AG04450 (cell line): ENCODE measurements at regions of chr1 and their contacts with region 1.

Region 1: GRCh38 chr1:165914136-165914798 is 86.9 kb downstream of the UCK2 start:
- DNase-seq: peak; percentile 67
- H3K4me3 ChIP-seq: no peak overlapping the region
- H3K27ac ChIP-seq: no peak overlapping the region
- H3K27me3 ChIP-seq: no peaks in the 10 kb centered on the region
- CTCF ChIP-seq: peak; percentile 93

Region 2: DNA sequence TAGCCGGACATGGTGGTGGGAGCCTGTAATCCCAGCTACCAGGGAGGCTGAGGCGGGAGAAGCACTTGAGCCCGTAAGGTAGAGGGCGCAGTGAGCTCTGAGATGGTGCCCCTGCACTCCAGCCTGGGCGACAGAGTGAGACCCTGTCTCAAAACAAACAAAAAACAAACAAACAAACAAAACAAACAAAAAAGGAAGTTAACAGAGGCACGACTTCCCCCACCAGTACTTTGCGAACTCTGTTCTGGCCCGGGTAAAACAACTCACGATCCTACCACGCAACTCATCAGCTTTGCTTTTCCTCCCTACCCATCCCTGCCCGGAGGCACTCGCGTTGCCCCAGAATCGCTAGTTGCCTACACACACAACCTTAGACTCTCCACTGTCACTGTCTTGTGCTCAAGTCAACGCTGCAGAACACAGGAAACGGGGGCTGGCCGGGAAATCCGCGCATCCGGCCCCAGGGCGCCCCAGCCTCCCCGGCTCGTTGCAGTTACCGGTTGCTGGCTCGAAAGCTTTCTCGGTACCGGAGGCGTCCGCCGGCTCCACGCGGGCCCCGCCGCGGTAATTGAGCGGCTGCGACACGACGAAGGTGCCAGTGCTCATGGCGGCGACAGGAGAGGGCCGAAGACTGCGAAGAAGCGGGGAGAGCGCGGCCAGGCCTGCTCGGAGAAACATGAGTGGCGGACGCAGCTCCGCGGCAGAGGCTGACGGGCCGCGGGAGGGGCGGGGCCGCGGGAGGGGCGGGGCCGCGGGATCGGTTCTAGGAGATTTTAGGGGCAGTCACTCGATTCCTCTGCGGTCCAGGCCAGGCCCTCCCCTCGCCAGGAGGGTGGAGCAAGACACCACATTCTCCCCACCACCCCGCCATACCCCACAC is 216.1 kb before region 1 on chr1 and contains the start of gene ALDH9A1:
- CTCF ChIA-PET with region 1: interaction called, 10 read pairs
- POLR2A ChIA-PET with region 1: no interaction called
- DNase-seq: peak; percentile 55
- H3K4me3 ChIP-seq: peak within 1 kb of the TSS; percentile 93
- H3K27ac ChIP-seq: peak within 1 kb of the TSS; percentile 92
- H3K27me3 ChIP-seq: no peaks in the 10 kb centered on the region
- CTCF ChIP-seq: peak; percentile 42
- polyA plus RNA-seq, gene ALDH9A1: 94.3 and 149 TPM in 2 replicates

Region 3: DNA sequence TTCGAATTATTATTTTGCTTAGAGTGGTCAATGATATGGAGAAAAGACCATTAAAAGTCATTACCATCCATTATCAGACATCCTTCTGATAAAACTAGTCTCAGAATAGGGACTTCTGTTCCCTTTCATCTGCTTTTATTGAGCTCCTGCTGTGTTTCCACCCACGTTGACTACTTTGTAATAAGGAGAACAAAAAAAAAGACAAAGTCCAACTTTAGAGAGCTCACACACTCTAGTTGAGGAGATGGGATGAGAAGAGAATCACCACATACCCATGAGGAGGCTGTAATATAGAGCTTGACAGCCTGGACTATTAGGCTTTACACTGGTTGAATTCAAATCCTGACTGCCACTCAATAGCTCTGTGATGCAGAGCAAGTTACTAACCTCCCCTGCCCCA is 188.1 kb before region 1 on chr1:
- CTCF ChIA-PET with region 1: interaction called, 25 read pairs
- POLR2A ChIA-PET with region 1: no interaction called
- DNase-seq: no peak
- H3K4me3 ChIP-seq: no peak overlapping the region
- H3K27ac ChIP-seq: no peak overlapping the region
- H3K27me3 ChIP-seq: no peaks in the 10 kb centered on the region
- CTCF ChIP-seq: no peak

Region 4: GRCh38 chr1:165759095-165759494 is 155.2 kb before region 1 on chr1:
- CTCF ChIA-PET with region 1: interaction called, 13 read pairs
- POLR2A ChIA-PET with region 1: no interaction called
- DNase-seq: no peak
- H3K4me3 ChIP-seq: no peak overlapping the region
- H3K27ac ChIP-seq: no peak overlapping the region
- H3K27me3 ChIP-seq: no peaks in the 10 kb centered on the region
- CTCF ChIP-seq: no peak

Region 5: DNA sequence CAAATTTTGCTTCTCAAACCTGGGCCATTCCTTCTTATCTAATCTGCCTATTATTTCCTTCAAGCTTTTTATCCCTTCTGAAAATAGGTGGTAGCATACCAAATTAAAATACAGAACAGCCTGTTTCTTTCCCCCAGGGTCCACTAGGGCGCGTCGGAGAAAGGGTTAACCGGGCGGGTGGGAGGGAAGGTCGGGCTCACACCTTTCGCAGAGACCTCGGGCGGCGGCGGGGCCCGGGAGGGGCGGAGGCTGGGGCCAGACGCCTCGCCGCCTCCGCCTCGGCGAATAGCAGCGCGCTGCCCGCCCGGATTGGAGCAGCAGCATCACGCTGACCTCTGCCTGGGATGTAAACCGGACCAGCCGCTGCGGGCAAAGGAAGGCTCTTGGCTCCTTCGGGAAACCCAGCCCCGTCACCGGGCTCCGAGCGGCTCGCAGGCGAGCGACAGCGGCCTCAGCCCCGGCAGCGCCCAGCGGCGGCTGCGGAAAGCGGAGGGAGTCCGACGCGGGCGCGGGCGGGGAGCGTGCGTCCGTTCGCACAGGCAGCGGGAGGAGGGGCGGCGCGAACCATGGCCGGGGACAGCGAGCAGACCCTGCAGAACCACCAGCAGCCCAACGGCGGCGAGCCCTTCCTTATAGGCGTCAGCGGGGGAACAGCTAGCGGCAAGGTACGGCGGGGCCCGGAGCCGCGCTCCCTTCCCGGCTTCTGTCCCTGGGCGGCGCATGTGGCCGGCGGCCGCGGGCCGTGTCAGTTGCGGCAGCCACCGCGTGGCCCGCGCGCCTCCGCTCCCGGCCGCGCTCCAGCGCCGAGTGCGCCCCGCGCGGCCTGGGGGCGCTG is 86.8 kb before region 1 on chr1 and contains the start of gene UCK2:
- CTCF ChIA-PET with region 1: interaction called, 27 read pairs
- POLR2A ChIA-PET with region 1: no interaction called
- DNase-seq: peak; percentile 43
- H3K4me3 ChIP-seq: peak within 1 kb of the TSS; percentile 88
- H3K27ac ChIP-seq: peak within 1 kb of the TSS; percentile 86
- H3K27me3 ChIP-seq: no peaks in the 10 kb centered on the region
- CTCF ChIP-seq: no peak
- polyA plus RNA-seq, gene UCK2: 52.7 and 59.1 TPM in 2 replicates

Region 6: DNA sequence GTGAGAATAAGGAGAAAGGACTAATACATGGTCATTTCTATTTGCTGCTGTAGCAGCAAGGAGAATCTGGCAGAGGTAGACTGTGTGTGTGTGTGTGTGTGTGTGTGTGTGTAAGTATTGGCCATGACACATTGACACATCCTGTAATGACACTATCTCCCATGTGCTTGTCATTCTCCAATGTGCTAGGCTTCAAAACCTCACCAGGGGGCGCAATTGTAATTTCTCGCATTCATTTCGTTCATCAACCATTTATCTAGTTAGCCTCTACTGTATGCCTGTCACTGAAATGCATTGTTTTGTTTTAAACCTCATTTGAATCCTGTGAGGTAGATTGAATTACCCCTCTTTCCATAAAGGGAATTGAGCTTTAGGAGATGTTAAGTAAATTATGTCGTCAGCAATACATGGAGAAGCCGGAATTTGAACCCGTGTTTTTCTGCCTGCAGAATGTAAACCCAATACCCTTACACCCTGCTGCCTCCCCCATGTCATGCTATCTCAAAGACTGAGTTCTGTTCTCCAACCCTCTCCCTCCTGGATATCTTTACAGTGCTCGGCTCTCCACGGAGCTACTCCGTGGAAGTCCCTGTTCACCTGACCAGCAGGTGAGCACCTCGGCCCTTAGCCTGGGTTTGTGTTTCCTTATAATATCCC is 13.9 kb after region 1 on chr1:
- CTCF ChIA-PET with region 1: interaction called, 53 read pairs
- POLR2A ChIA-PET with region 1: no interaction called
- DNase-seq: peak; percentile 10
- H3K4me3 ChIP-seq: no peak overlapping the region
- H3K27ac ChIP-seq: no peak overlapping the region
- H3K27me3 ChIP-seq: no peaks in the 10 kb centered on the region
- CTCF ChIP-seq: peak; percentile 73

Region 7: GRCh38 chr1:165942927-165943597 is 28.8 kb after region 1 on chr1:
- CTCF ChIA-PET with region 1: no interaction called
- POLR2A ChIA-PET with region 1: no interaction called
- DNase-seq: no peak
- H3K4me3 ChIP-seq: no peak overlapping the region
- H3K27ac ChIP-seq: no peak overlapping the region
- H3K27me3 ChIP-seq: no peaks in the 10 kb centered on the region
- CTCF ChIP-seq: no peak

Region 8: GRCh38 chr1:166272155-166272554 is 357.9 kb after region 1 on chr1:
- CTCF ChIA-PET with region 1: no interaction called
- POLR2A ChIA-PET with region 1: no interaction called
- DNase-seq: no peak
- H3K4me3 ChIP-seq: no peak overlapping the region
- H3K27ac ChIP-seq: no peak overlapping the region
- H3K27me3 ChIP-seq: no peaks in the 10 kb centered on the region
- CTCF ChIP-seq: no peak